BJ (cell line): ENCODE measurements at regions of chr13 and their contacts with region 1.

Region 1: GRCh38 chr13:59677966-59678814 is 485.5 kb downstream of the DIAPH3 start:
- DNase-seq: peak; percentile 24
- H3K4me3 ChIP-seq: no peak overlapping the region
- H3K27me3 ChIP-seq: no peaks in the 10 kb centered on the region
- CTCF ChIP-seq: peak; percentile 85

Region 2: GRCh38 chr13:59391696-59392095 is 286.5 kb before region 1 on chr13:
- CTCF ChIA-PET with region 1: interaction called, 96 read pairs
- POLR2A ChIA-PET with region 1: interaction called, 3 read pairs
- DNase-seq: no peak
- H3K4me3 ChIP-seq: no peak overlapping the region
- H3K27me3 ChIP-seq: no peaks in the 10 kb centered on the region
- CTCF ChIP-seq: peak; percentile 93

Region 3: GRCh38 chr13:59641817-59642216 is 36.4 kb before region 1 on chr13:
- CTCF ChIA-PET with region 1: no interaction called
- POLR2A ChIA-PET with region 1: no interaction called
- DNase-seq: peak; percentile 33
- H3K4me3 ChIP-seq: no peak overlapping the region
- H3K27me3 ChIP-seq: peaks cover 4% of the 10 kb centered on the region
- CTCF ChIP-seq: no peak

Region 4: GRCh38 chr13:59666504-59666903 is 11.7 kb before region 1 on chr13:
- CTCF ChIA-PET with region 1: interaction called, 11 read pairs
- POLR2A ChIA-PET with region 1: no interaction called
- DNase-seq: no peak
- H3K4me3 ChIP-seq: no peak overlapping the region
- H3K27me3 ChIP-seq: no peaks in the 10 kb centered on the region
- CTCF ChIP-seq: no peak

Region 5: GRCh38 chr13:59771272-59771671 is 93.1 kb after region 1 on chr13:
- CTCF ChIA-PET with region 1: interaction called, 28 read pairs
- POLR2A ChIA-PET with region 1: no interaction called
- DNase-seq: no peak
- H3K4me3 ChIP-seq: no peak overlapping the region
- H3K27me3 ChIP-seq: no peaks in the 10 kb centered on the region
- CTCF ChIP-seq: peak; percentile 76

Region 6: GRCh38 chr13:59906413-59907049 is 228.3 kb after region 1 on chr13:
- CTCF ChIA-PET with region 1: interaction called, 19 read pairs
- POLR2A ChIA-PET with region 1: no interaction called
- DNase-seq: no peak
- H3K4me3 ChIP-seq: no peak overlapping the region
- H3K27me3 ChIP-seq: no peaks in the 10 kb centered on the region
- CTCF ChIP-seq: peak; percentile 76